Activated B cell treated with CpG ODN at 0.5 μM for 24 hours (primary cell): ENCODE measurements at regions of chr4 and their contacts with region 1.

Region 1: GRCh38 chr4:1200425-1201035 is 28.1 kb upstream of the SPON2 start:
- DNase-seq: no peak
- ATAC-seq: peak; percentile 5
- H3K4me3 Mint-ChIP-seq: no peak overlapping the region
- H3K27ac Mint-ChIP-seq: no peak overlapping the region
- H3K4me1 Mint-ChIP-seq: peaks cover 42% of the 10 kb centered on the region
- H3K27me3 Mint-ChIP-seq: no peaks in the 10 kb centered on the region
- CTCF ChIP-seq: no peak

Region 2: GRCh38 chr4:1183985-1184773 is 16.4 kb before region 1 on chr4:
- CTCF ChIA-PET with region 1: no interaction called
- POLR2A ChIA-PET with region 1: interaction called, 3 read pairs
- intact Hi-C with region 1: loop called (anchors 2 kb)
- DNase-seq: no peak
- ATAC-seq: peak; percentile 73
- H3K4me3 Mint-ChIP-seq: peak overlapping the region; percentile 73
- H3K27ac Mint-ChIP-seq: peak overlapping the region; percentile 72
- H3K4me1 Mint-ChIP-seq: peaks cover 34% of the 10 kb centered on the region
- H3K27me3 Mint-ChIP-seq: no peaks in the 10 kb centered on the region
- CTCF ChIP-seq: no peak

Region 3: DNA sequence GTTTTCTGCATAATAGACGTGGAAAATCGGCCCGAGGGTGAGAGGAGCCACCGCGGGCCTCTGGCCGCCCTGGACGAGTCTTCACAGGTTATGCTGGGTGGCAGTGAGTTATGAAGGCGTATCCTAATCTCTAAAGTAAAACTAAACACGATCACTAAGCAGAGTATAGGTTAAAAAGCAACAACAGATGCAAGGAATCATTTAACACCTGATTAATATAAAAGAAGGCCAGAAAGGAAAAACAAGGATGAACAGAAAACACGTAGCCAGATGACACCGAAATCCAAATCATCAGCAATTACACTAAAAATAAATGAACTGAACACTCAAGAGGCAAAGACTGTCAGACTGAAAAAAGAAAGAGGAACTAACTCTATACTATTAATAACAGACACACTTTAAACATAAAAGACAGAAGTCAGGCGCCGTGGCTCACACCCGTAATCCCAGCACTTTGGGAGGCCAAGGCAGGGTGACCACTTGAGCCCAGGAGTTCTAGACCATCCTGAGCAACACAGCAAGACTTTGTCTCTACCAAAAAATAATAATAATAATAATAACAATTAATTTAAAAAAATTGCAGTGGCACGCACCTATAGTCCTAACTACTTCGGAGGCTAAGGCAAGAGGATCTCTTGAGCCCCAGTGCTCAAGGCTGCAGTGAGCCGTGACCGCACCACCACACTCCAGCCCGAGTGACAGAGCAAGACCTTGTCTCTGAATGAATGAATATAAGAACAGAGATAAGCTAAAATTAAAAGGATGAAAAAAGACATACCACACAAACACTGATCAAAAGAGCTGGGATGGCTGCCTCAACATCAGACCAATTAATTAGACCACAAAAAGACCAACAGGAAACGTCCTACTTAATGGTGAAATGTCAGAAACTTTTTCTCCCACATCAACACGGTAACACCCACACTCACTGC is 18.4 kb after region 1 on chr4:
- CTCF ChIA-PET with region 1: no interaction called
- POLR2A ChIA-PET with region 1: interaction called, 3 read pairs
- intact Hi-C with region 1: loop called (anchors 1 kb)
- DNase-seq: peak; percentile 41
- ATAC-seq: peak; percentile 88
- H3K4me3 Mint-ChIP-seq: peak overlapping the region; percentile 75
- H3K27ac Mint-ChIP-seq: peak overlapping the region; percentile 81
- H3K4me1 Mint-ChIP-seq: peaks cover 64% of the 10 kb centered on the region
- H3K27me3 Mint-ChIP-seq: no peaks in the 10 kb centered on the region
- CTCF ChIP-seq: no peak